OCI-LY7 (cell line): ENCODE measurements at regions of chr9 and their contacts with region 1.

Region 1: GRCh38 chr9:34500623-34501267 is 22.0 kb downstream of the ENHO start:
- DNase-seq: peak; percentile 60
- H3K4me3 ChIP-seq: no peak overlapping the region
- H3K27ac ChIP-seq: no peak overlapping the region
- H3K4me1 ChIP-seq: no peaks in the 10 kb centered on the region
- CTCF ChIP-seq: peak; percentile 99

Region 2: GRCh38 chr9:34328987-34329832 is 171.5 kb before region 1 on chr9 and contains the starts of genes KIF24 and NUDT2:
- CTCF ChIA-PET with region 1: no interaction called
- POLR2A ChIA-PET with region 1: no interaction called
- intact Hi-C with region 1: loop called (anchors 1 kb)
- DNase-seq: peak; percentile 100
- H3K4me3 ChIP-seq: peak within 1 kb of the TSS; percentile 98
- H3K27ac ChIP-seq: peak within 1 kb of the TSS; percentile 74
- H3K4me1 ChIP-seq: peaks cover 46% of the 10 kb centered on the region
- CTCF ChIP-seq: no peak
- total RNA-seq, gene KIF24: 16.3 and 19.4 TPM in 2 replicates
- total RNA-seq, gene NUDT2: 23.8 and 27.7 TPM in 2 replicates

Region 3: GRCh38 chr9:34403554-34404380 is 97.0 kb before region 1 on chr9:
- CTCF ChIA-PET with region 1: interaction called, 4 read pairs
- POLR2A ChIA-PET with region 1: no interaction called
- intact Hi-C with region 1: loop called (anchors 2 kb)
- DNase-seq: peak; percentile 65
- H3K4me3 ChIP-seq: no peak overlapping the region
- H3K27ac ChIP-seq: no peak overlapping the region
- H3K4me1 ChIP-seq: no peaks in the 10 kb centered on the region
- CTCF ChIP-seq: peak; percentile 100

Region 4: GRCh38 chr9:34437006-34437925 is 63.5 kb before region 1 on chr9:
- CTCF ChIA-PET with region 1: no interaction called
- POLR2A ChIA-PET with region 1: no interaction called
- intact Hi-C with region 1: loop called (anchors 1 kb)
- DNase-seq: peak; percentile 76
- H3K4me3 ChIP-seq: no peak overlapping the region
- H3K27ac ChIP-seq: no peak overlapping the region
- H3K4me1 ChIP-seq: no peaks in the 10 kb centered on the region
- CTCF ChIP-seq: peak; percentile 89

Region 5: DNA sequence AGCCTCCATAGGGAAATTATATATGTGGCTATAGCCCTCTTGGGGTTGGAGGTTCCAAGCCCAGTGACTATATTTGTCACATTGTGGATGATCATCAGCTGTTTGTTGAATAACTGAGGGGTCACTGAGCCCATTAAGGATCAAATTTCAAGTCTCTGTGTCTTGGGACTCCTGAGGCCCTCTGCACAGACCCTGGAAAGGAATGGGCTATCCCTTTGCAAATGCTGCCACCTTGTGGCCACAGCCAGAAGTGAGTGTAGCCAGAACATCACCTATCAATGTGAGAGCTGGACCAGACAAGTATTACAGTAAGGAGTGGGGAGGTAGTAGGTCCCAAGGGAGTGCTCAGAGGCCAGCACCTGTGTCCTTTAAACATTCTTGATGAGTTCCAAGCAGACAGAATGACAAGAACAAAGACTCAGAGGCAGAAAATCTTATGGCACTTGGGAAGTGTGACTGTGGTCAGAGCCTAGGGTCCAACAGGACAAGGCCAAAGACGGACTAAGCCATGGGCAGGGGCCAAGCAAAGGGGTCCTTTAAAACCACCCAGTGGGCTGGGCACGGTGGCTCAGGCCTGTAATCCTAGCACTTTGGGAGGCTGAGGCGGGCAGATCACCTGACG is 103.0 kb after region 1 on chr9:
- CTCF ChIA-PET with region 1: no interaction called
- POLR2A ChIA-PET with region 1: no interaction called
- intact Hi-C with region 1: loop called (anchors 5 kb)
- DNase-seq: peak; percentile 78
- H3K4me3 ChIP-seq: no peak overlapping the region
- H3K27ac ChIP-seq: no peak overlapping the region
- H3K4me1 ChIP-seq: no peaks in the 10 kb centered on the region
- CTCF ChIP-seq: peak; percentile 96